Activated naive CD4-positive, alpha-beta T cell treated with anti-CD3 and anti-CD28 coated beads for 36 hours (primary cell): ENCODE measurements at regions of chr2 and their contacts with region 1.

Region 1: DNA sequence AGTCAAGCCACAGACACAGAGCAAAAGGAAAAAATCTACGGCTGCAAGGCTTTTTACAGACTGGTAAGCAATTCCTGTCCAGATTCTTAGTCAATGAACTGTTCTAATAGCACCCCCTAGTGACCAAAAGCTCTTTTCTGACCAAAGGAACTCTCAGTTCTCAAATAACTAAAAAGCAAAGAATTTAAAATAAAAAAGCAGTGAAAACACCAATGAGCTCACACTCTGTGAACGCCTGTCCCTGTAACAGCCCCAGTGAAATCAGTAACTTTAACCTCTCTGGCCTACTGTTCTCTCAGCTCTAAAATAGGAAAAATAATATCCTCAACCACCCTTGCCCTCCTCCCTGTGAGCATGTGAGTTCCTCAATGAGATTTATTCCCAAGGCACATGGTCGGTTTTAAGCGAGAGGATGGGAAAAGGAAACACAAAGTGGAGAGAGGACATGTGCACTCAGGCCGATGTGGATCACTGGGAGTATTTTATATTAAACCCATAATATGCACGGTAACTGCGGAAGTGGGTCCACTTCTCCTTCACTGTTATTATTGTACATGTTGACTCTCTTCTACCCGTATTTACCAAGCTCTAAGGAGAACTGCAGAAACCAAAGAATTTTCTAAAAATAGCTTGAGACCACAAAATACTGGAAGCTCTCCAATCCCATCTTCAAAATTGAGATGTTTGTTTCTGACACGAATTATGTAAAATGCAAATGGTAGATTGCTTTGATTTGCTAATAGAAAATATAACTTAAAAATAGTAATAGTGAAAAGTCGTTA is 128.5 kb downstream of the STK39 start:
- DNase-seq: peak; percentile 7
- H3K4me3 Mint-ChIP-seq: no peak overlapping the region
- H3K27ac Mint-ChIP-seq: no peak overlapping the region
- H3K4me1 Mint-ChIP-seq: no peaks in the 10 kb centered on the region
- H3K27me3 Mint-ChIP-seq: no peaks in the 10 kb centered on the region

Region 2: GRCh38 chr2:166539340-166540162 is 1579.4 kb before region 1 on chr2:
- CTCF ChIA-PET with region 1: interaction called, 4 read pairs
- intact Hi-C with region 1: loop called (anchors 1 kb)
- DNase-seq: peak; percentile 21
- H3K4me3 Mint-ChIP-seq: no peak overlapping the region
- H3K27ac Mint-ChIP-seq: no peak overlapping the region
- H3K4me1 Mint-ChIP-seq: no peaks in the 10 kb centered on the region
- H3K27me3 Mint-ChIP-seq: peaks cover 12% of the 10 kb centered on the region

Region 3: GRCh38 chr2:167689444-167689843 is 429.5 kb before region 1 on chr2:
- CTCF ChIA-PET with region 1: no interaction called
- intact Hi-C with region 1: loop called (anchors 2 kb)
- DNase-seq: no peak
- H3K4me3 Mint-ChIP-seq: no peak overlapping the region
- H3K27ac Mint-ChIP-seq: no peak overlapping the region
- H3K4me1 Mint-ChIP-seq: no peaks in the 10 kb centered on the region
- H3K27me3 Mint-ChIP-seq: no peaks in the 10 kb centered on the region

Region 4: GRCh38 chr2:167869200-167869599 is 249.7 kb before region 1 on chr2:
- CTCF ChIA-PET with region 1: interaction called, 3 read pairs
- intact Hi-C with region 1: loop called (anchors 1 kb)
- DNase-seq: no peak
- H3K4me3 Mint-ChIP-seq: no peak overlapping the region
- H3K27ac Mint-ChIP-seq: no peak overlapping the region
- H3K4me1 Mint-ChIP-seq: no peaks in the 10 kb centered on the region
- H3K27me3 Mint-ChIP-seq: peaks cover 11% of the 10 kb centered on the region

Region 5: GRCh38 chr2:168091986-168092385 is 26.9 kb before region 1 on chr2:
- CTCF ChIA-PET with region 1: interaction called, 15 read pairs
- intact Hi-C with region 1: no loop called
- DNase-seq: no peak
- H3K4me3 Mint-ChIP-seq: no peak overlapping the region
- H3K27ac Mint-ChIP-seq: no peak overlapping the region
- H3K4me1 Mint-ChIP-seq: peaks cover 14% of the 10 kb centered on the region
- H3K27me3 Mint-ChIP-seq: no peaks in the 10 kb centered on the region